Dendritic cell treated with granulocyte-macrophage colony-stimulating factor and Interleukin-4, amounts not matched to agents 40 ng/mL and 50 ng/mL, for 4 days (primary cell): ENCODE measurements at regions of chr6 and their contacts with region 1.

Region 1: DNA sequence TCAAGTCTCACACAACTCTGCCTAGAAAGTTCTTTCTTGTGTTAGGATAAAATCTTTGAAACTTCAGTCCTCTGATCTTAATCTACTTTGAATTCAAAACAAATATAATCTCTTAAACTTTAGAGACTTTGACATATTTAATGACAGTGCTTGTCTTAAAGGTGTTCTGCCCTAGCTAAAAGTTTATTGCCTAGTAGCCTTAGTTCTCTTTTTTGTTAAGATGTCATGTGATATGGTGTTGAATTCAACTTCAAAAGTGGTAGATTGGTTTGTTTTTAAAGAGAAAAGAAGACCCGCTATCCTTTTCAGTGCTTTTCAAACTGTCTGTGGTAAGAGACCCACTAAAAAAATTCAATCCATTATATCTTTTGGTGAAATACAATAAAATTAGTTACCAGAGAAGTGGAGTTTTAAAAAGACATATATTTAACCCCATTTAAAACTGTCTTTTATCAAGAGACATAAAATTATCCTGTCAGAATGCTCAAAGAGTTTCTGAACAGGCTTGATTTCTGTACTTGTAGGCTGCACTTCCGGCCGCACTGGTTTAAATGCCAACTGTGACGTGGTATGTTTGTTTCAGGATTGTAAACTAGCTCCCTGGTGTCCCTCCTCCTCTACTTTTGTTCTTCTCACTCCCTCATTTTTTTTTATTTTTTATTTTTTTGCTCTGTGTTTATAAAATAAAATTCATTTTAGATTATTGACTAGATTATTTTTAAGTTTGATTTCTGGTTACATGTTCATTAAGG is 76.5 kb downstream of the QKI start:
- H3K4me3 Mint-ChIP-seq: no peak overlapping the region
- H3K27ac Mint-ChIP-seq: no peak overlapping the region
- H3K4me1 Mint-ChIP-seq: peaks cover 67% of the 10 kb centered on the region
- H3K27me3 Mint-ChIP-seq: no peaks in the 10 kb centered on the region

Region 2: GRCh38 chr6:163501026-163501425 is 10.0 kb after region 1 on chr6:
- intact Hi-C with region 1: loop called (anchors 2 kb)
- H3K4me3 Mint-ChIP-seq: no peak overlapping the region
- H3K27ac Mint-ChIP-seq: no peak overlapping the region
- H3K4me1 Mint-ChIP-seq: peaks cover 62% of the 10 kb centered on the region
- H3K27me3 Mint-ChIP-seq: no peaks in the 10 kb centered on the region

Region 3: DNA sequence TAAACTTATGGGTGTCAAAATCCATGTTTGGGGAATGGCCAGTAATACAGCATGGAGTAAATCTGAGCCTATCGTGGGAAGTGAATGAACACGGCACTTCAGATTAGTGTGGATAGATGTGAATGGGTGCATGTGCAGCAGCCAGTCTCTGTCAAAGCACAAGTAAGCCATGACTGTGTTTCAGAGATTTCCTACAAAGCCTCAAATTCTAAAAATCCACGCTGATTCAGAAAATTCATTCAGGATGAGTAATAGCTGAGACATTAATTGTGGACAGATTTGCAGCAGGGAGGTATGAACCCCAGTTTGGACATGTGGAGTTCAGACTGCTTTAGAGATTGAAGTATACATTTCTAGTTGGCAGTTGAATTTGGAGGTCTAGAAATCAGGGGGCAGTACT is 38.6 kb after region 1 on chr6:
- intact Hi-C with region 1: loop called (anchors 5 kb)
- H3K4me3 Mint-ChIP-seq: no peak overlapping the region
- H3K27ac Mint-ChIP-seq: no peak overlapping the region
- H3K4me1 Mint-ChIP-seq: peaks cover 52% of the 10 kb centered on the region
- H3K27me3 Mint-ChIP-seq: no peaks in the 10 kb centered on the region